ENCODE measurements at regions of chr14 and their contacts with region 1.

Region 1: DNA sequence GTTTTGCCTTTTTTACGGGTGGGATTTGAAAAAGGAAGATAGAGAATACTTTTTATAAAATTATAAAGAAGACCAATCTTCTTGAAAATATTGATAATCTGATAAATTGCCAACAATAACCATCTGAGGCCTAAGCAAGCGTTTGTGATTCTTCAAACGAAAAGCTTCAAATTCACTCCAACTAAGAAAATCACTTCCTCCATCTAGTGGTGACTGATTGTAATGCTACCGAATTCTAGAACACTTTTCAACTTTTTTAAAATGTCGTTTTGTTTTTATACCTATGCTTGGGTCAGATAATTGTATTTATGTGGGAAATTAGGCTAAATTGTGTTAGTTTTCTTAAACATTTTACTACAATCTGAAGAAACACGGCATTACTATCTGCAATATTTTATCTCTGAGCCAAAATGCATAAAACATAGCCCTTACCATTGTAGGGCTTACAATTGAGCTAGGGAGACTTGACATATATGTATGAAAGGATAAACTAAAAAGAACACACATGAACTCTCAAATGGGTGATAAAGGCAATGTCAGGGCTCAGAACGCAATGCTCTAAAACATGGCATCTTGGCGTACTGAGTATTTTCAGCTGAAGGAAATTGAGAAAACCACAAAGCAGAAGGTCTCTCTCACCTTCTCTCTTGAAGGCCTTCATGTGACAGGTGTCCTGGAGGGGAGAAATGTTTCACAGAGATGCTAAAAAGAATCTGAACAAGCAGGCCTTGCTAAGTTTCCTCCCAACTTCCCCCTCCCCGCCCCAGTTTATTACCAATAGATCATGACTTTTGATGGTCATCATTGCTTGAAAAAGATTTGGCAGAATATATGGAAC is 36.8 kb upstream of the G2E3 start:
- DNase-seq: no peak
- ATAC-seq: no peak
- H3K4me3 ChIP-seq: no peak overlapping the region
- H3K27ac ChIP-seq: no peak overlapping the region
- H3K4me1 ChIP-seq: peaks cover 0 to 12% (median 0%) of the 10 kb centered on the region in 9 donors
- H3K27me3 ChIP-seq: no peaks in the 10 kb centered on the region
- CTCF ChIP-seq: peak; percentile 39 to 82 (median 72)

Region 2: GRCh38 chr14:30375296-30375892 is 146.7 kb before region 1 on chr14:
- intact Hi-C with region 1: loop called in 7 of 10 experiments (anchors 2 to 10 kb)
- DNase-seq: peak; percentile 30 to 42
- ATAC-seq: peak in 3 of 8 donors; percentile 40 to 74 (median 49)
- H3K4me3 ChIP-seq: no peak overlapping the region
- H3K27ac ChIP-seq: no peak overlapping the region
- H3K4me1 ChIP-seq: no peaks in the 10 kb centered on the region
- H3K27me3 ChIP-seq: peaks cover 0 to 8% (median 2%) of the 10 kb centered on the region in 7 donors
- CTCF ChIP-seq: peak; percentile 34 to 81 (median 74)

Region 3: GRCh38 chr14:30402846-30403245 is 119.3 kb before region 1 on chr14:
- intact Hi-C with region 1: no loop called
- DNase-seq: no peak
- ATAC-seq: no peak
- H3K4me3 ChIP-seq: no peak overlapping the region
- H3K27ac ChIP-seq: no peak overlapping the region
- H3K4me1 ChIP-seq: no peaks in the 10 kb centered on the region
- H3K27me3 ChIP-seq: no peaks in the 10 kb centered on the region
- CTCF ChIP-seq: no peak

Region 4: GRCh38 chr14:30443368-30444007 is 78.6 kb before region 1 on chr14:
- intact Hi-C with region 1: no loop called
- DNase-seq: no peak
- ATAC-seq: peak in 1 of 8 donors; percentile 56
- H3K4me3 ChIP-seq: no peak overlapping the region
- H3K27ac ChIP-seq: no peak overlapping the region
- H3K4me1 ChIP-seq: no peaks in the 10 kb centered on the region
- H3K27me3 ChIP-seq: peaks cover 0 to 4% (median 0%) of the 10 kb centered on the region in 7 donors
- CTCF ChIP-seq: peak in 8 of 9 donors; percentile 12 to 67 (median 51)

Measured in heart right ventricle (tissue), 16 donors.